ENCODE measurements at regions of chr3 and their contacts with region 1.

Region 1: GRCh38 chr3:25723802-25724201 is 59.1 kb upstream of the TOP2B start:
- DNase-seq: no peak
- ATAC-seq: no peak
- H3K4me3 ChIP-seq: no peak overlapping the region
- H3K27ac ChIP-seq: no peak overlapping the region
- H3K4me1 ChIP-seq: no peaks in the 10 kb centered on the region
- H3K27me3 ChIP-seq: no peaks in the 10 kb centered on the region
- CTCF ChIP-seq: no peak
- EP300 ChIP-seq: no peak
- POLR2A ChIP-seq: no peak
- RAD21 ChIP-seq: no peak

Region 2: DNA sequence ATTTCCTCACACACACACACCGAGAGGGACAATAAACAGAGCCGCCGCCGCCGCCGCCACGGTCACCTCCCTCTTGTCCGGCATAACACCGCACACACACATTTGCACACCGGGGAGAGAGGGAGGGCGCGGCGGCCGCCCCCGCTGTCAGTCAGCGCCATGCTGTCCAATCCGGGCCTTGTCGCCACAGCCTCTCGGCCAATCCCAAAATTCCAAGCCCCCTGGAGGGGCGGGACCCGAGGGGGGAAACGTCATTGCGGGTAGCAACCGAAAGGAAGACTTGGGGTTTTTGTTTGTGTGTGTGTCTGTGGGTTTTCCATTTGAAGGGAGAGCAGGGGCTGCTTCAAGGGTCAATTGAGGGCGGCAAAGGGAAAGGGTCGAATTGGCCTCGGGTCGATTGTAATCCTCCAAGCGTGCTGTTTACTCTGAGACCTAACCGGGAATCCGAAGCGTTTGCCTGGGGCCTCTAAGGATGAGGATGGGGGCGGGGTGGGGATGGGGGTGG is 58.9 kb before region 1 on chr3 and contains the start of gene TOP2B:
- CTCF ChIA-PET with region 1: no interaction called
- POLR2A ChIA-PET with region 1: no interaction called
- in situ Hi-C with region 1: no loop called
- intact Hi-C with region 1: loop called (anchors 10 kb)
- DNase-seq: peak; percentile 90
- ATAC-seq: peak; percentile 96
- H3K4me3 ChIP-seq: peak within 1 kb of the TSS; percentile 71 to 93 (median 89)
- H3K27ac ChIP-seq: peak within 1 kb of the TSS; percentile 93
- H3K4me1 ChIP-seq: peaks cover 40% of the 10 kb centered on the region
- H3K27me3 ChIP-seq: no peaks in the 10 kb centered on the region; a peak in 1 of 5 replicates
- CTCF ChIP-seq: no peak
- EP300 ChIP-seq: peak; percentile 15 to 62; a peak in 1 of 4 replicates
- POLR2A ChIP-seq: peak in 1 of 2 experiments; percentile 75; a peak in 2 of 4 replicates
- RAD21 ChIP-seq: no peak
- total RNA-seq, gene TOP2B: 88.1 and 140 TPM in 2 replicates

Region 3: DNA sequence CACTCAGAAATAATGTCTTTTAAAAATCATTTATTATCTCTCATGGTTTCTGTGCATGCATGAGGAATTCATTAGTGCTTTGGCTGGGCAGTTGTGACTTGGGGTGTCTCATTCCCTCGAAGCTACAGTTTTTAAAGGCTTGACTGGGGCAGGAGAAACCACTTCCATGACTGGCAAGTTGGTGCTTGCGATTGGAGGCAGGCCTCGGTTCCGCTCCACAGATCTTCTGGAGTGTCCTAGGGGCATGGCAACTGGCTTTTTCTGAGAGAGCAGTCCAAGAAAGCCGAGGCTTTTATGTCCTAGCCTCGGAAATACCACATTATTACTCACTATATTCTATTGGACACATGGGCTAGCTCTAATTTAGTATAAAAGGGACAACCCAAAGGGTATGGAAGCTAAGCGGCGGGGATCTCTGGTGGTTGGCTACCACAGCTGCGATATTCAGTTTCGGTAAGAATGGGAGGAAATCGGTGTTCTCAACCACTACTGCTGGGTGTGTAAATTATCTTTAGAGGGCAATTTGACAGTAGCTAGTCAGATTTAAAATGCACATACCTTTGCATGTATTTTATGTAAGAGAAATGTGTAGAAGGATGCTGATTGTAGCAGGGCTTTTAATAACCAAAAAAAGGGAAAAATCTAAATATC is 10.3 kb before region 1 on chr3:
- CTCF ChIA-PET with region 1: no interaction called
- POLR2A ChIA-PET with region 1: no interaction called
- in situ Hi-C with region 1: no loop called
- intact Hi-C with region 1: no loop called
- DNase-seq: no peak
- ATAC-seq: no peak
- H3K4me3 ChIP-seq: no peak overlapping the region
- H3K27ac ChIP-seq: no peak overlapping the region
- H3K4me1 ChIP-seq: no peaks in the 10 kb centered on the region
- H3K27me3 ChIP-seq: 0 out of 5 replicates have a peak, but pooled peaks cover 0 to 3% of the 10 kb centered on the region in 2 experiments
- CTCF ChIP-seq: no peak
- EP300 ChIP-seq: no peak
- POLR2A ChIP-seq: no peak
- RAD21 ChIP-seq: no peak

Region 4: DNA sequence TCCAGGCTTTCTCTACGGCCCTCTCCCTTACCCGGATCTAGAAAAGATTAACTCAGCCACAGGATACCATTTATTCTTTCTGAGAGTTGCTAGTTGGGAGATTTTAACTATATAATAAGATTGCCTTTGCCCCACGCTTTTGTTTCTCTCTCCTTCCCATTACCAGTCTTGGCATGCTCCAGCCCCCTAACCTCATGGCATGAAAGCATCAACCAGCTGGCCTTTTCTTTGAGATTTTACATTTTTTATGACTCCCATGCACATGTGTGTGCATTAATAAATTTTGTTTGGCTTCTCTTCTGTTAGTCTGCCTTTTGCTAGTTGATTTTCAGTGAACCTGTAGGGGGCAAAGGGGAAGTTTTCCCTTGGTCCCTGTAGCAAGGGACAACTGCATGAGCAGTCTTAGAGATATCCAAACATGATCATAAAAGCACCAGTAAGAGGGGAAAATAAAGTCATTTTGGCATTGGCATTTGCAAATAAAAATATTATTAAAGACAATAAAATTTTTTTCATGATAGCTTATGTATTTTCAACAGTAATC is 139.7 kb after region 1 on chr3:
- CTCF ChIA-PET with region 1: no interaction called
- POLR2A ChIA-PET with region 1: no interaction called
- in situ Hi-C with region 1: no loop called
- intact Hi-C with region 1: no loop called
- DNase-seq: no peak
- ATAC-seq: peak; percentile 72; the same call in 2 of the 3 replicates
- H3K4me3 ChIP-seq: no peak overlapping the region
- H3K27ac ChIP-seq: no peak overlapping the region
- H3K4me1 ChIP-seq: no peaks in the 10 kb centered on the region
- H3K27me3 ChIP-seq: no peaks in the 10 kb centered on the region
- CTCF ChIP-seq: no peak
- EP300 ChIP-seq: no peak
- POLR2A ChIP-seq: no peak
- RAD21 ChIP-seq: no peak

Region 5: DNA sequence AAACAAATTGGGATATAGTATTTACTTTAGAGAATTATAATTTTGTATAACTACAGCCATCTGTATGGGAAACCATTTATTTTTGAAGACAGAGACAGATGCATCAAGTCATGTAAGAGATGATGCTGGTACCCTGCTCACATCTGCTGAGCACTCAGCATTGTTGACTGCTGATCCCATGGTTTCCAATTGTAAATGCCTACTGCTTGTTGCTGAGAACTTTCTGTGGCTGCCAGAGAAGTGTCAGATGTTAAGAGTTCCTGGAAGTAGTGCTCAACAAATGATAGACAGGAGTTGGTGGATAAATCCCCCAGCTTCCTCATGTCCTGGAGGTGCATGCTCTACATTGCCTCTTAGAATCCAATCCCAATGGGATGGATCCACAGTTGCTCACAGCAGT is 233.2 kb after region 1 on chr3:
- CTCF ChIA-PET with region 1: no interaction called
- POLR2A ChIA-PET with region 1: no interaction called
- in situ Hi-C with region 1: no loop called
- intact Hi-C with region 1: no loop called
- DNase-seq: no peak
- ATAC-seq: no peak
- H3K4me3 ChIP-seq: no peak overlapping the region
- H3K27ac ChIP-seq: no peak overlapping the region
- H3K4me1 ChIP-seq: no peaks in the 10 kb centered on the region
- H3K27me3 ChIP-seq: no peaks in the 10 kb centered on the region
- CTCF ChIP-seq: no peak
- EP300 ChIP-seq: no peak
- POLR2A ChIP-seq: no peak
- RAD21 ChIP-seq: no peak

Measured in HepG2 (cell line).